GM23248 (cell line): ENCODE measurements at regions of chr2 and their contacts with region 1.

Region 1: GRCh38 chr2:224909885-224910573 is 132.2 kb downstream of the DOCK10 start:
- DNase-seq: peak; percentile 89
- H3K4me3 ChIP-seq: no peak overlapping the region; the same call in 1 of the 2 replicates
- H3K27ac ChIP-seq: peak overlapping the region; percentile 76
- H3K4me1 ChIP-seq: peaks cover 21% of the 10 kb centered on the region
- H3K27me3 ChIP-seq: no peaks in the 10 kb centered on the region

Region 2: GRCh38 chr2:225002039-225002655 is 92.1 kb after region 1 on chr2:
- in situ Hi-C with region 1: loop called (anchors 10 kb)
- DNase-seq: peak; percentile 84
- H3K4me3 ChIP-seq: no peak overlapping the region
- H3K27ac ChIP-seq: no peak overlapping the region
- H3K4me1 ChIP-seq: peaks cover 34% of the 10 kb centered on the region
- H3K27me3 ChIP-seq: no peaks in the 10 kb centered on the region